WTC11 (cell line): ENCODE measurements at regions of chr17 and their contacts with region 1.

Region 1: DNA sequence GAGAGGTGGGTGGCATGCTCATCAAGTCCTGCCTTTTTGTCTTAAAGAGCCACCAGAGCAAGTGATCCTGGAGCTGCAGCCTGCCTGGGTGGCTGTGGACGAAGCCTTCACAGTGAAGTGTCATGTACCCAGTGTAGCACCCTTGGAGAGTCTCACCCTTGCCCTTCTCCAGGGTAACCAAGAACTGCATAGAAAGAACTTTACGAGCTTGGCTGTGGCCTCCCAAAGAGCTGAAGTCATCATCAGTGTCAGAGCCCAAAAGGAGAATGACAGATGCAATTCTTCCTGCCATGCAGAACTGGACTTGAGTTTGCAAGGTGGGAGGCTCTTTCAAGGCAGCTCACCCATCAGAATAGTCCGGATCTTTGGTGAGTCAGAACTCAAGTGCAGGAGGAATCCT is 14.2 kb downstream of the CSH2 start:
- DNase-seq: no peak
- ATAC-seq: no peak
- H3K4me3 Mint-ChIP-seq: no peak overlapping the region
- H3K27ac Mint-ChIP-seq: no peak overlapping the region
- H3K4me1 Mint-ChIP-seq: no peaks in the 10 kb centered on the region
- H3K27me3 Mint-ChIP-seq: peaks cover 52% of the 10 kb centered on the region
- CTCF ChIP-seq: no peak

Region 2: DNA sequence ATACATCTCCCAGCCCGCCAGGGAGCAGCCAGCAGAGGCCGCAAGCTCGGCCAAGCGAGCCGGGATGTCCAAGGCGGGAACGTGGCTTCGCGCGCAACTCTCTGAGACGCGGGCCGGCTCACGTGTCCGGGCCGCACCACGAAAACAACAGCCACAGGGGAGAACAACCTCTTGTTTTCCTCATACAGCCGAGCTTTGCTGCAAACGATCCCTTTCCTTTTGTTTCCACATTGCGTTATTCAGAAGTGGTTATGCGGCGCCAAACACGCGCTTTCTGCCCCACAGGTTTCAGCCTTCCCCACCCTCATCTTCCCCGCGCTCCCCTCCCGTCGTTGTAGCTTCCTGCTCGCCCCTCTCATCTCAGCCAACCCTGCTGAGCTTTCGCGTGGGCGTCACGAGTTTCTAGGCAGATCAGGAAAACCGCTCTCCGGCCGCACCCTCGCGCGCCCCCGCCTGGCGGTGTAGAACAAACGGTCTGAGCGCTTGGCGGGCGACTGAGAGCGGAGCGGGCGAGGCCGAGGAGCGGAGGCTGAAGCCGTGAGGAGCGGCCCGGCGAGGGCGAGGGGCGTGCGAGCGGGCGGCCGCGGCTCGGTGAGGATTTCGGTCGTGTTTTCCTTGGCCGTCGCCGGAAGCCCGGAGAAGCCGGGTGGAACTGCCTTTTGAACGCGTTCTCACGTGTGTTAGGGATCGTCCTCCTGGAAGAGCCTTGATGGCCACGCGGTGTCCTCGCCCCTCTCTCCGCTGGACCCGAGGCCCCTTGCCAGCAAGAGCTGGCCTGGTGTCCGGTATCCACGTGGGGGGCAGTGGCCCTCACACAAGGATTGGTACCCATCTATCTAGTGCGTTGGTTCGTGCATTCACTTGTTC is 10.2 kb before region 1 on chr17:
- CTCF ChIA-PET with region 1: interaction called, 43 read pairs
- POLR2A ChIA-PET with region 1: no interaction called
- DNase-seq: peak; percentile 97
- ATAC-seq: peak; percentile 94
- H3K4me3 Mint-ChIP-seq: peak overlapping the region; percentile 60
- H3K27ac Mint-ChIP-seq: peak overlapping the region; percentile 97
- H3K4me1 Mint-ChIP-seq: no peaks in the 10 kb centered on the region
- H3K27me3 Mint-ChIP-seq: peaks cover 84% of the 10 kb centered on the region
- CTCF ChIP-seq: peak; percentile 35; the same call in 1 of the 2 replicates

Region 3: DNA sequence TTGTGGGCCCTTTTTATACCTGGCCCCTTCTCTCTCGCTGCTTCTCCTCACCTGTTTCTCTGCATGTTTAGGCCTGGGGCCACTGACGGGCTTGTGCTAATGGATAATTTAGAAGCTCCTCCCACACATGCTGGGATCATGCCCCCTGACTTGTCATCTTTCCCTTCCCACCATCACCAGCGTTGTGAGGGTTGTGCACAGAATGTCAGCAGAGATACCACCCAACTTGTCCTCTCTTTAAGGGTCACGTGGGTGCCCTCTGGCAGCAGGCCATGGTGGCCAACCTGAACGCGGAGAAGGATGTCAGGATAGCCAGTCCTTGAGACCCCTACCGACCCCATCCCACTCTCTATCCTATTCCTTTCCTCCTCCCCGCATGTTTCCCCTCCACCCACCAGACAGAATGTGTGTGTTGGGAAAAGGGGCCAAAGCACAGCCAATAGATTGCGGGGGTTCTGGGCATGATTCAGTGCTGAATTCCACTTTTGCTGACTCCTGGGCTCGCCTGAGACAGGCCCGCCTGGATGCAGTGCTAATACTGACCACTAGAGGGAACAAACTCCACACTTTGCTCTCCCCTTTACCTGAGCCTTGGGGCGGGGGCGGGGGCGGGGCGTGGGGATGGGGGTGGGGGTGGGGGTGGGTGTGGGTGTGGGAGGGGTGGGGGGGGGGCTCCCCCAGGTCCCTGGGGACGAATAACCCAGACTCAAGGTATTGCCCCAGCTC is 22.8 kb after region 1 on chr17 and contains the start of gene GH2:
- CTCF ChIA-PET with region 1: interaction called, 16 read pairs
- POLR2A ChIA-PET with region 1: no interaction called
- DNase-seq: peak; percentile 86
- ATAC-seq: peak; percentile 83
- H3K4me3 Mint-ChIP-seq: peak within 1 kb of the TSS; percentile 23; the same call in 1 of the 2 replicates
- H3K27ac Mint-ChIP-seq: peak within 1 kb of the TSS; percentile 79
- H3K4me1 Mint-ChIP-seq: peaks cover 20% of the 10 kb centered on the region
- H3K27me3 Mint-ChIP-seq: peaks cover 4% of the 10 kb centered on the region; the same call in 1 of the 2 replicates
- CTCF ChIP-seq: peak; percentile 81
- total RNA-seq, gene GH2: 0.35 to 1.3 TPM (median 0.60 TPM) in 3 replicates